CD4-positive, alpha-beta T cell (primary cell): ENCODE measurements at regions of chr12 and their contacts with region 1.

Region 1: DNA sequence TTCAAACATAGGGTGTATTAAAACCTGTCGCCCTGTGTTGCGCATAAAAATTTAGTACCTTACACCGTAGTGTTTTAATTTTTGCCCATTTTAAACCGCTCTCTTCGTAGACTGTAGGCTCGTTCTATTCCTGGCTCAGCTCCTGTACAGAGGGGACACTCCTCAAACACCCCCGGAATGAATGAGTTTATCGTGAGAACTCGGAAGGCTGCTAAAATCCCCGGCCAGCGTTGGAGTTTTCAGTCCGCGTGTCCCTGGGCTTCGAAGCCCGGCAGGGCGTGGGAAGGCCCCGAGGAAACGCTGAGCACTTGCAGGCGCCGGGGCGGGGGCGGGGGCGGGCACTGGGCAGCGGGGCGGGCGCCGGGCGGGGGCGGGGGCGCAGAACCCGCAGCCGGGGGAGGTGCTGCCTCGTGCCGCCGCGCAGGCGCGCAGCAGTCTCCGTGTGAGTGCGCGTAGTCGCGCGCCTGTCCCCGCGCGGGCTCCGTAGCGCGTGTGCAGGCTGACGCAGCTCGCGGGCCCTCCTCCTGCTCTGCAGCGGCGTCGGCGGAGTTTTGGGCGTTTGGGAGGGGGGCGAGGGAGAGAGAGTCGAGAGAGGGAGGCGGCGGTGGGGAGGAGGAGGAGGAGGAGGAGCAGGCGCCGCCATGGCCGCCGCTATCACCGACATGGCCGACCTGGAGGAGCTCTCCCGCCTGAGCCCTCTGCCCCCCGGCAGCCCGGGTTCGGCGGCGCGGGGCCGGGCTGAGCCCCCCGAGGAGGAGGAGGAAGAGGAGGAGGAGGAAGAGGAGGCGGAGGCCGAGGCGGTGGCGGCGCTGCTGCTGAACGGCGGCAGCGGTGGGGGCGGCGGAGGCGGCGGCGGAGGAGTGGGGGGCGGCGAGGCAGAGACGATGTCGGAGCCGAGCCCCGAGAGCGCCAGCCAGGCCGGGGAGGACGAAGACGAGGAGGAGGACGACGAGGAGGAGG is at the start of gene AEBP2:
- DNase-seq: peak; percentile 89 to 99 (median 94)
- ATAC-seq: peak; percentile 89
- H3K4me3 ChIP-seq: peak within 1 kb of the TSS; percentile 89
- H3K4me3 Mint-ChIP-seq: peak within 1 kb of the TSS; percentile 99
- H3K27ac ChIP-seq: peak within 1 kb of the TSS; percentile 83 to 93
- H3K27ac Mint-ChIP-seq: peak within 1 kb of the TSS; percentile 97
- H3K4me1 ChIP-seq: peaks cover 23% of the 10 kb centered on the region
- H3K4me1 Mint-ChIP-seq: peaks cover 59% of the 10 kb centered on the region
- H3K27me3 ChIP-seq: no peaks in the 10 kb centered on the region
- H3K27me3 Mint-ChIP-seq: no peaks in the 10 kb centered on the region
- CTCF ChIP-seq: no peak
- total RNA-seq, gene AEBP2: 42.9 to 44.8 TPM

Region 2: GRCh38 chr12:19482551-19483109 is 43.3 kb after region 1 on chr12:
- CTCF ChIA-PET with region 1: no interaction called
- POLR2A ChIA-PET with region 1: no interaction called
- intact Hi-C with region 1: loop called (anchors 5 kb)
- DNase-seq: peak in 12 of 14 experiments; percentile 6 to 66 (median 25)
- ATAC-seq: peak; percentile 65
- H3K4me3 ChIP-seq: peak overlapping the region; percentile 6
- H3K4me3 Mint-ChIP-seq: peak overlapping the region; percentile 45
- H3K27ac ChIP-seq: peak overlapping the region; percentile 54 to 75
- H3K27ac Mint-ChIP-seq: peak overlapping the region; percentile 70
- H3K4me1 ChIP-seq: peaks cover 40% of the 10 kb centered on the region
- H3K4me1 Mint-ChIP-seq: peaks cover 59% of the 10 kb centered on the region
- H3K27me3 ChIP-seq: no peaks in the 10 kb centered on the region
- H3K27me3 Mint-ChIP-seq: no peaks in the 10 kb centered on the region
- CTCF ChIP-seq: no peak

Region 3: DNA sequence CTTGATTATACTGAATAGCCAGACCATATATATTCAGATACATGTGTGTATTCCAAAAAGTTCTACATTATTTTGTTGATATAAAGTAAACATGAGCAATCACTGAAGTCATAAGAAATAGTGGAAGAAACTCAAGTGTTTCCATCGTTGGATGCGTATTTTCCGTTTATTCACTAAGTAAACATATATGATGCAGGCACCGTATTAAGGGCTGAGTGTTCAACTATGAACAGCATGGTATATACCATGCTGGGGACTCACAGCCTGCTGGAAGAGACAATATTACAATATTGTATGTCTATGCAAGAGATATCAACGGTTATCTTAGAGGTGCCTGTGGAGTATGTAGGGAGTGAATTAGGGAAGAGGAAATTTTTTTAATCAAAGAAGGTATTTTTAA is 1999.3 kb after region 1 on chr12:
- CTCF ChIA-PET with region 1: no interaction called
- POLR2A ChIA-PET with region 1: no interaction called
- intact Hi-C with region 1: loop called in 1 of 2 experiments (anchors 10 kb)
- DNase-seq: peak in 1 of 14 experiments; percentile 16
- ATAC-seq: no peak
- H3K4me3 ChIP-seq: peak overlapping the region; percentile 89
- H3K4me3 Mint-ChIP-seq: peak overlapping the region; percentile 99
- H3K27ac ChIP-seq: peak overlapping the region in 1 of 2 donors; percentile 12
- H3K27ac Mint-ChIP-seq: peak overlapping the region; percentile 97
- H3K4me1 ChIP-seq: peaks cover 19% of the 10 kb centered on the region
- H3K4me1 Mint-ChIP-seq: peaks cover 55% of the 10 kb centered on the region
- H3K27me3 ChIP-seq: no peaks in the 10 kb centered on the region
- H3K27me3 Mint-ChIP-seq: no peaks in the 10 kb centered on the region
- CTCF ChIP-seq: no peak